ENCODE measurements at regions of chr19 and their contacts with region 1.

Region 1: DNA sequence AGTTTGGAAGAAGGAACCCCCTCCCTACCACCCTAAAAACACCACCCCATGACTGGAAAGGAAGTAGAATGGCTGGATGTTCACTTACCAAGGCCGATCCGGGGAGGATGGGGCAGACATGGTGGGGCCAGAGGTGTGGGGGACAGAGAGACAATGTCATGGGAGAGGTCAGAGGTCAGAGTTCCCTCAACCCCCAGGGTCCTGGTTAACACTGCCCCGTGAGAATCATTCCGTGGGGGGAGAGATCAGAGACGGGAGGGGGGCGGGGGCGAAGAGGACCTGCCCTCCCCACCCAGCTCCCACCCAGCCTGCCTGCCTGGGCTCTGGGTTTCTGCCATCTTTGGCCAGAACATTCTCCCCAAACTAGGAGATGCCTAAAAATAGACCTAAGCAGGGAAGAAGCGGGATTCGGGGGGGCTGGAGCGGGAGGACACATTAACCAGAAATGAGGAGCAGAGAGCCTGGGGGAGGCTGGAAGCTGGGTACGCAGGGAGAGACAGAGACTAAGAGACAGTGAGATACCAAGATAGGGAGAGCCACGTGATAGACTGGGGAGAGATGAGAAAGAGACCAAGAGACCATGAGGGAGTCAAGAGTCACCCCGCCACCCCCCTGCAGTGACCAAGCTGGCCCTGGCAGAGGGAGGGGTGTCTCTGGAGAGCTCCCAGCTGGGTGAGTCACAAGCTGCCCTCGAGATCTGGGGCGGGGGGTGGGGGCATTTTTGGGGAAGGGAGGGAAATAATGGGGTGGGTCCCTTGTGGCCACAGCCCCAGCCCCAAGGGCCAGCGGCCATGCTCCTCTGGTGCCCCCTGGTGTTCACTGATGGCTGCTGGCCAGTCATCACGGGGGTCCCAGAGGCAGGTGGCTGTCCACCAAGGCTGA is 6.1 kb upstream of the KANK2 start:
- DNase-seq: peak; percentile 46 to 88
- H3K4me3 ChIP-seq: no peak overlapping the region
- H3K27ac ChIP-seq: no peak overlapping the region
- H3K4me1 ChIP-seq: no peaks in the 10 kb centered on the region; a peak in 2 of 7 replicates
- H3K27me3 ChIP-seq: no peaks in the 10 kb centered on the region
- CTCF ChIP-seq: peak; percentile 74 to 94 (median 90)
- EP300 ChIP-seq: no peak
- POLR2A ChIP-seq: no peak
- RAD21 ChIP-seq: peak; percentile 79 to 82

Region 2: DNA sequence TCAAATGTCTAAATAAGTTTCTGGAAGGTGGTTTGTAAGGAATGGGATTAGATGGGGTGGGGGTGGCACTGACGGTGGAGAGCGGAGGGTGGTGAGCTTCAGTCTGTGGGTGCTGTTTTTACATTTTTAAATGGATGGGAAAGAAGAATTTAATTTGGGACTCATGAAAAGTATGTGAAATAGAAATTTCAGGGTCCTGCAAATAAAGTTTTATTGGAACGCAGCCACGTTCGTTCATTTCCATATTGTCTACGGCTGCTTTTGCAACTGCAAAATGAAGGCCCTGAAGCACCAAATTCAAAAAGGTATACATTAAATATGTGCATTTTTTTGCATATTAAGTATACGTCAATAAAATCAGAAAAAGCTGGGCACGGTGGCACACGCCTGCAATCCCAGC is 16.0 kb before region 1 on chr19:
- CTCF ChIA-PET with region 1: interaction called, 10 read pairs
- POLR2A ChIA-PET with region 1: interaction called, 3 read pairs
- DNase-seq: no peak
- H3K4me3 ChIP-seq: no peak overlapping the region
- H3K27ac ChIP-seq: no peak overlapping the region
- H3K4me1 ChIP-seq: no peaks in the 10 kb centered on the region
- H3K27me3 ChIP-seq: no peaks in the 10 kb centered on the region
- CTCF ChIP-seq: no peak
- EP300 ChIP-seq: no peak
- POLR2A ChIP-seq: no peak
- RAD21 ChIP-seq: no peak

Measured in H1 (cell line).